ENCODE measurements at regions of chr20 and their contacts with region 1.

Region 1: GRCh38 chr20:36439040-36439730 is 102.1 kb upstream of the MYL9 start:
- DNase-seq: peak; percentile 60 to 96
- H3K4me3 ChIP-seq: no peak overlapping the region
- H3K27ac ChIP-seq: no peak overlapping the region
- H3K4me1 ChIP-seq: peaks cover 0 to 6% (median 2%) of the 10 kb centered on the region in 4 experiments; a peak in 3 of 7 replicates
- H3K27me3 ChIP-seq: peaks cover 0 to 10% (median 5%) of the 10 kb centered on the region in 4 experiments; a peak in 3 of 7 replicates
- CTCF ChIP-seq: peak; percentile 95 to 98 (median 96)
- EP300 ChIP-seq: no peak
- POLR2A ChIP-seq: no peak
- RAD21 ChIP-seq: peak; percentile 97

Region 2: DNA sequence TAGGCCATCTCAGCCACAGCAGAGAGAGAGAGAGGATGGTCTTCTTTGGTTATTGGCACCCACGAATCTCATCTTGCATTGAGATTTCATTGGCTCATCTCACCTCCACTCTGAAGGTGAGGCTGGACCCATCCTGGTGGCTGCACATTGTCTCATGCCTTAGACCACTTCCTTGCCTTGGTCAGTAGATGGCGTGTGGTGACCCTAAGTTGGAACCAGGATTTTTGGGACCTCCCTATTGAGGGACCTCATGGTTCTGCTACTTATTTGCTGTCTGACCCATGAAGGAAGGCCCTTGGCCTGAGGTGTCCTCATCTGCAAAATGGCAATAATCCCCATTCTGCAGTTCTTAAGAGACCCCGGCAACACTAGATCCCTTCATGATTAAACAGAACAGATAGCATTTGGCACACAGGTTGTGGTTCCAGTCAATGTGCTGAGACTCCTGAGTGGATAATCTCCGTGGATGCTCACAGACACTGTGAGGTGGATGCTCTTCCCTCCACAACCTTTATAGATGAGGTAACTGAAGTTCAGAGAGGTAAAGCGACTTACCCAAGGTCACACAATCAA is 224.4 kb before region 1 on chr20:
- CTCF ChIA-PET with region 1: interaction called, 62 read pairs
- POLR2A ChIA-PET with region 1: no interaction called
- DNase-seq: no peak
- H3K4me3 ChIP-seq: no peak overlapping the region
- H3K27ac ChIP-seq: no peak overlapping the region
- H3K4me1 ChIP-seq: no peaks in the 10 kb centered on the region
- H3K27me3 ChIP-seq: peaks cover 0 to 2% (median 0%) of the 10 kb centered on the region in 4 experiments; a peak in 1 of 7 replicates
- CTCF ChIP-seq: peak; percentile 82 to 94 (median 84)
- EP300 ChIP-seq: no peak
- POLR2A ChIP-seq: no peak
- RAD21 ChIP-seq: peak; percentile 87 to 93

Region 3: GRCh38 chr20:36279362-36279761 is 159.8 kb before region 1 on chr20:
- CTCF ChIA-PET with region 1: interaction called, 54 read pairs
- POLR2A ChIA-PET with region 1: no interaction called
- DNase-seq: no peak
- H3K4me3 ChIP-seq: no peak overlapping the region
- H3K27ac ChIP-seq: no peak overlapping the region
- H3K4me1 ChIP-seq: no peaks in the 10 kb centered on the region; a peak in 1 of 7 replicates
- H3K27me3 ChIP-seq: no peaks in the 10 kb centered on the region
- CTCF ChIP-seq: no peak
- EP300 ChIP-seq: no peak
- POLR2A ChIP-seq: no peak
- RAD21 ChIP-seq: no peak

Region 4: GRCh38 chr20:36377352-36378326 is 61.5 kb before region 1 on chr20:
- CTCF ChIA-PET with region 1: interaction called, 17 read pairs
- POLR2A ChIA-PET with region 1: no interaction called
- DNase-seq: no peak
- H3K4me3 ChIP-seq: no peak overlapping the region
- H3K27ac ChIP-seq: no peak overlapping the region
- H3K4me1 ChIP-seq: 0 out of 7 replicates have a peak, but pooled peaks cover 0 to 2% (median 0%) of the 10 kb centered on the region in 4 experiments
- H3K27me3 ChIP-seq: no peaks in the 10 kb centered on the region
- CTCF ChIP-seq: no peak
- EP300 ChIP-seq: no peak
- POLR2A ChIP-seq: no peak
- RAD21 ChIP-seq: no peak

Region 5: DNA sequence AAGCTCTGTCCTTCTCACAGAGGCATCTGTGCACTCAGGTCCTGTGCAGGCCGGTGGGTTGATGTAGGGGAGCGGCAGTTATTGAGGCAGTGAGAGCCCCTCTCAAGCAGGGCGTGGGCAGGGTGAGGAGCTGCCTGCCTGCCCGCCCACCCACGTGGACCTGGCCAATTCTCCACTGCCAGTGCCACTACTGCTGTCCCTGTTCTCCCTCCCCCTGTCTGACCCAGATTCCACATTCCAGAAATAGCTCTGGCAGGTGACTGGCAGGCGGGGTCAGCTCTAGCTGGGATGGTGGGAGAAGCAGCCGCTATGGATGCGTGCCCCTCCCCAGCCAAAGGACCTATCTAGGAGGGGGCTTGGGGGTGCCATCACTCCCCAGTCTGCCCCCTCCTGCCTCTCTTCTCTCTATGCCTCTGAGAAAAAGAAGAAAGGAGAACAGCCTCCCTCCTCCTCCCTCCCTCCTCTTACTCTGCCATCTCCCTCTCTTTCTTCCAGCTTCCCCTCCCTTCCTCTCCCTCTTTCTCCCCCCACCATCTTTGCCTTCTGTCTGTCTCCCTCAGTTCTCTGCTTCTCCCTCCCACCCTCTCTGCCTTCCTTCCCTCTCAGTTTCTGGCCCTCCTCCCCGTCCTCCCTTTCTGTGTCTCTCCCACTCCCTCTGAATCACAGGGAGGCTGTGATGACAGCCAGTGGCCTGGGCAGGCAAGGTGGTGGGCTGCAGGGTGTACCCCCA is 15.7 kb after region 1 on chr20:
- CTCF ChIA-PET with region 1: interaction called, 29 read pairs
- POLR2A ChIA-PET with region 1: no interaction called
- DNase-seq: peak in 1 of 2 experiments; percentile 54
- H3K4me3 ChIP-seq: no peak overlapping the region
- H3K27ac ChIP-seq: peak overlapping the region; percentile 6; the same call in 1 of the 2 replicates
- H3K4me1 ChIP-seq: peaks cover 3 to 12% (median 9%) of the 10 kb centered on the region in 4 experiments
- H3K27me3 ChIP-seq: no peaks in the 10 kb centered on the region
- CTCF ChIP-seq: no peak
- EP300 ChIP-seq: no peak
- POLR2A ChIP-seq: no peak
- RAD21 ChIP-seq: no peak

Region 6: GRCh38 chr20:36506253-36506652 is 67.1 kb after region 1 on chr20:
- CTCF ChIA-PET with region 1: no interaction called
- POLR2A ChIA-PET with region 1: no interaction called
- DNase-seq: no peak
- H3K4me3 ChIP-seq: no peak overlapping the region
- H3K27ac ChIP-seq: no peak overlapping the region
- H3K4me1 ChIP-seq: no peaks in the 10 kb centered on the region
- H3K27me3 ChIP-seq: no peaks in the 10 kb centered on the region
- CTCF ChIP-seq: peak in 2 of 3 experiments; percentile 33 to 63; a peak in 3 of 4 replicates
- EP300 ChIP-seq: no peak
- POLR2A ChIP-seq: no peak
- RAD21 ChIP-seq: peak; percentile 26 to 49; a peak in 3 of 4 replicates

Region 7: GRCh38 chr20:36606158-36607116 is 167.3 kb after region 1 on chr20:
- CTCF ChIA-PET with region 1: no interaction called
- POLR2A ChIA-PET with region 1: no interaction called
- DNase-seq: no peak
- H3K4me3 ChIP-seq: peak overlapping the region; percentile 73 to 98 (median 95)
- H3K27ac ChIP-seq: peak overlapping the region; percentile 78; the same call in 1 of the 2 replicates
- H3K4me1 ChIP-seq: peaks cover 0 to 4% (median 2%) of the 10 kb centered on the region in 4 experiments; a peak in 3 of 7 replicates
- H3K27me3 ChIP-seq: no peaks in the 10 kb centered on the region; a peak in 1 of 7 replicates
- CTCF ChIP-seq: no peak
- EP300 ChIP-seq: no peak
- POLR2A ChIP-seq: no peak
- RAD21 ChIP-seq: no peak

Region 8: DNA sequence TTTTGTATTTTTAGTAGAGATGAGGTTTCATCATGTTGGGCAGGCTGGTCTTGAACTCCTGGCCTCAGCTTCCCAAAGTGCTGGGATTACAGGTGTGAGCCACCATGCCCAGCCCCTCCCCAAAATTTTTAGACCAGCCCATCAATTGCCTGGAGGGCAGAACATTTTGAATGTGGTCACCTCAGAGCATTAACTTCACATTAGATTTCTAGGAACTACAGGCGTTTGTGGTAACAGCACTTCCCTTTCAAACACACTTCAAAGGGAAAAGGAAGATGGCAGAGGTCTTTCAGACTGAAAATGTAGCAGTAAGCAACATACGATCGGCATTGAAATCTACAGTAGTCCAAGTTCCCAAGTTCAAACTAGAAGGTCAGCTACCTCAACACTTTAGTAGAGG is 219.1 kb after region 1 on chr20:
- CTCF ChIA-PET with region 1: no interaction called
- POLR2A ChIA-PET with region 1: no interaction called
- DNase-seq: no peak
- H3K4me3 ChIP-seq: no peak overlapping the region
- H3K27ac ChIP-seq: no peak overlapping the region
- H3K4me1 ChIP-seq: no peaks in the 10 kb centered on the region
- H3K27me3 ChIP-seq: no peaks in the 10 kb centered on the region
- CTCF ChIP-seq: no peak
- EP300 ChIP-seq: no peak
- POLR2A ChIP-seq: no peak
- RAD21 ChIP-seq: no peak

Measured in H1 (cell line).